Cardiac septum (tissue), 1 donor: ENCODE measurements at regions of chr19 and their contacts with region 1.

Region 1: DNA sequence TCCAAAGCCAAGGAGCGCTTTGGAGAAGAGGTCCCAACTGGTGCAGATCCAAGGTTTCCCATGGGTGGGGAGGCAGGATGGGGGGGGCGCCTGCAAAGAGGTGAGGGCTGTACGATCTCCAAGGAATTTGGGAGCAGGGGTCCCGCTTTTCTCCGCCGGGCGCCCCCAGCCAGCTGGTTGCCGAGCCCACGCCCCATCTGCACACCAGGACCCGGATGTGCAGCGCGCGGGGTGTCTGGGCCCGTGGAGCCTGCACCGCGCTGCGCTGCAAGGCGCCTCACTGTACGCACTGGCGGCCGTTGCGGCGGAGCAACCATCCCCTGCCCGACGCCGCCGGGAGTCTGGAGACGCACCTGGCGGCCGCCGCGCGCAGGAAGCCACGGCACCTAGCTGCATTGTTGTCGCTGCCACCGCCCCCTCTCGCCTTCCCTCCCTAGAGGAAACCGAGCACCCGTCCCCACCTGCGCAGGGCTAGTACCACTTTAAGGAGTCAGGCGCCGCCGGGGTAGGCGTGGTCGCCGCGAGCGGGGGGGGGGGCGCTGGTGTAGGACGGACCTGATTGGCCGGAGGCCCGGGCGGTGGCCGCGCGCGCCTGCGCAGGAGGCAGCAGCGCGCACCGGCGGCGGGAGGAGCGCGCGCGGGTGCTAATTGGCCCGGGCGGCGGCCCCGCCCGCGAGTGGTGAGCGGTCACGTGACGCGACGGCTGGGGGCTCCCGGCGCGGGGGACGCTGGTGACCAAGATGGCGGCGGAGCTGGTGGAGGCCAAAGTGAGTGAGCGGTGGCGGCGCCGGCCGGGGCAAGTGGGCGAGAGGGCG is at the start of gene PIAS4:
- DNase-seq: peak; percentile 97
- total RNA-seq, gene PIAS4: 18.4 TPM

Region 2: GRCh38 chr19:4035582-4035981 is 28.4 kb after region 1 on chr19:
- intact Hi-C with region 1: no loop called
- DNase-seq: no peak

Region 3: DNA sequence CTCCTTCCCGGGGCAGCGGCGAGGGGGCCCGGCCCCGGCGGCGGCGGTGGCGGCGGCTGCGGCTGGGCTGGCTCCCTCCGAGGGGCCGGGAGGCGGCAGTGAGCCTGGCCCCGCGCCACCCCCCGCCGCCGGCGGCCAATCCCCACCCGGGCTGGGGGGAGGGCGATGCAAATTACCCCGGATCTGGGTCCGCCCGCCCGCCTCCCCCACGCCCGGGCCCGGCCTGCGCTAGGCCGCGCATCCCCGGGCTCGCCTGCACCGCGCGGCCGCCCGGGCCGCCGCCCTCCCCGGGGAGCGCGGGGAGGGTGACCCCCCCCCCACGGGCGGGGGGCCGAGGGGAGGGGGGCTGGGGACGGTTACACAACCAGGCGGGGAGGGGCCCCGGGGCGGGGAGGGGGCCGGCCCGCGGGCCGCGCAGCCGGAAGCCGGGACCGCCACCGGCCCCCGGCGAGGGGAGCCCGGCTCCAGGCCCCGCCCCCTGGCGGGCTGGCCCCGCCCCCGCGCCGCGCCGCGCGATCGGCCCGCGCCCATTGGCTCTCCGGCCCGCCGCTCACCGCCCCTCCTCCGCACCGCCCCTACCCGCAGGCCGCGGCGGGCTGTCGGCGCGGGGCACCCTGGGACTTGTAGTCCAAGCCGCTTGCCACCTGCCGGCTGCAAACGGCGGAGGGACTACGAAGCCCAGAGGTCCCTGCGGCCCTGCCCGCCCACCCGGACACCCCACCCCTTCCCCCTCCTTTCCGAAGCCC is 58.4 kb after region 1 on chr19:
- intact Hi-C with region 1: loop called (anchors 5 kb)
- DNase-seq: peak; percentile 99

Region 4: DNA sequence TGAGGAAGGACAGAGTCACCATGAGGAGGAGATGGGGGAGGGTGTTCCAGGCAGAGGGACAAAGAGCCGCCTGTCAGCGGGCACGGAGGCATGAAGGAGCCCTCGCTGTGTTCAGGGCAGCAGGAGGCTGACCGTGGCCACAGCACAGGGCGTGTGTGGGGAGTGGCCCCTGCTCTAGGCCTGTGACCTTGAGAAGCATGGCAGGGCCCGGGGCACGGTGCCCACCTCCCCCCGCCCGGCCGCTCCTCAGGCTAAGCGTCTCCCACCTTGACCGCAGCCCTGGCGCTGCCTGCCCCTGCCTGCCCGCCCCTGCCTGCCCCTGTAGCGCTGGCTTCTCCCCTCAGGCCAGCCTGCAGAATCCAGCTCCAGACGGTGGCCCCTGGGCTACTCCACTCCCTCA is 105.1 kb after region 1 on chr19:
- intact Hi-C with region 1: no loop called
- DNase-seq: no peak

Region 5: DNA sequence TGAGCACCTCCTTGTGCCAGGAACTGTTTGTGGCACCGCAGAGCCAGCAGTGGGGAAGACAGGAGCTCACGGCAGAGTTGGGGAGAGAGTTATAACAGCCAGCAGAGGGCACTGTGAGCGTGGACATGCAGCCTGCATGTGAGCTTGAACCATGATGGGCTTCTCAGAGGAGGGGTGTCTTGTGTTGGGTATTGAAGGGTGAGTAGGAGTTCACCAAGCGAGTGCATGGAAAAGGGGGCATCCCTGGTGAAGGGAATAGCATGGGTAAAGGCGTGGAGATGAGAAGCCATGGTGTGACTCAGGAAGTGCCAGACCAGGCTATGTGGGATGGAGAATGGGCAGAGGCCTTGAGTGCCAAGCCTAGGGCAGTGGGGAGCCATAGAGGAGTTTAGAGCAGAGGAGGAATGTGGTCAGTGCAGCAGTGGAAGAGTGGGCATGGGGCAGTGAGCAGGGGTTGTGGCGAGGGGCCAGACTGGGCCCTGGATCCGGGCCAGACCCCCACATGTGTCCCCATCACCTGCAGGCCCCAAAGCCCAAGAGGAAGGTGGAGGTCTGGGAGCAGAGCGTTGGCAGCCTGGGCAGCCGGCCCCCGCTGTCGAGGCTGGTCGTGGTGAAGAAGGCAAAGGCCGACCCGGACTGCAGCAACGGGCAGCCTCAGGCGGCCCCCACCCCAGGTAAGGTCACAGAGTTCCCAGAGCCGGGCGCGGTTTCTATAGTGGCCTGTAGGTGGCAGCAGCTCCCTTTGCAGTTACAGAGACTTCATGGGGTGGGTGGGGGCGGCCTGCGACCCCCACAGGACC is 260.1 kb after region 1 on chr19:
- intact Hi-C with region 1: no loop called
- DNase-seq: no peak